ENCODE measurements at regions of chr1 and their contacts with region 1.

Region 1: GRCh38 chr1:89820422-89821321 is at the start of gene LRRC8D:
- DNase-seq: peak; percentile 89
- H3K4me3 ChIP-seq: peak within 1 kb of the TSS; percentile 74
- H3K27ac ChIP-seq: peak within 1 kb of the TSS; percentile 89
- H3K4me1 ChIP-seq: peaks cover 37% of the 10 kb centered on the region
- CTCF ChIP-seq: no peak
- total RNA-seq, gene LRRC8D: 19.3 and 23.8 TPM in 2 replicates

Region 2: GRCh38 chr1:89794406-89794805 is 26.3 kb before region 1 on chr1:
- CTCF ChIA-PET with region 1: no interaction called
- POLR2A ChIA-PET with region 1: no interaction called
- intact Hi-C with region 1: no loop called
- DNase-seq: no peak
- H3K4me3 ChIP-seq: no peak overlapping the region
- H3K27ac ChIP-seq: no peak overlapping the region
- H3K4me1 ChIP-seq: no peaks in the 10 kb centered on the region
- CTCF ChIP-seq: no peak

Region 3: GRCh38 chr1:89843281-89844121 is 22.8 kb after region 1 on chr1:
- CTCF ChIA-PET with region 1: interaction called, 3 read pairs
- POLR2A ChIA-PET with region 1: interaction called, 72 read pairs
- intact Hi-C with region 1: loop called (anchors 1 kb)
- DNase-seq: peak; percentile 85
- H3K4me3 ChIP-seq: peak overlapping the region; percentile 87
- H3K27ac ChIP-seq: peak overlapping the region; percentile 52
- H3K4me1 ChIP-seq: peaks cover 41% of the 10 kb centered on the region
- CTCF ChIP-seq: peak; percentile 80

Region 4: GRCh38 chr1:89865498-89866385 is 45.1 kb after region 1 on chr1:
- CTCF ChIA-PET with region 1: no interaction called
- POLR2A ChIA-PET with region 1: no interaction called
- intact Hi-C with region 1: no loop called
- DNase-seq: no peak
- H3K4me3 ChIP-seq: no peak overlapping the region
- H3K27ac ChIP-seq: no peak overlapping the region
- H3K4me1 ChIP-seq: peaks cover 27% of the 10 kb centered on the region
- CTCF ChIP-seq: no peak

Region 5: DNA sequence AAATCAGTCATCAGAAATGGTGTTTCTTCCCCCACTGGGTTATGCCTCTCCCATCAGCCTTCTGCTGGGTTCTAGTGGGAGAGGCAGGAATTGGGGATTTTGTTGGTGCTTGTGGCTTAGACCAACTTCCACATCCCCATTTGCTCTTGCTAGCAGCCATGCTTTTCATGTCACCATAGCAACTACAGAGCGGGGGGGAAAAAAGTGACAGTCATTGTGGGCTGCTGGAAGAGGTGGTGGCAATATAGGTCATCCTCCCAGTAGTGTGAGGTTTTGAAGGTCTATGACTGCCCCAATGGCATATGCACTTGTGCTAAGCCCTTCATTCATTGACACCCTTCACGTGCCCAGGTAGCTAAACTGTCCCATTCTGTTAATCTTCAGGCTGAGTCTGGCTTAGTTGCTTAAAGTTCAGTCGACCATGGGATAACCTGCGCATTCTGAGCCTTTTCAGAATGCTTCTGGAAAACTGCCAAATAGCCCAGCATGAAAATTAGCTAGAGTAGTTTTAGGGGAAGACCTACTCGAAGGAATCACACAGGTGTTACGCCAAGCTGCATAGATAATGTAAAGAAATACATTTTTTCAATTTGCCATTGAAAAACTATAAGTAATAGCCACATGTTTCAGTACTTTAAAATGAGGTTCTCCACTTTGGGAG is 120.6 kb after region 1 on chr1:
- CTCF ChIA-PET with region 1: no interaction called
- POLR2A ChIA-PET with region 1: no interaction called
- intact Hi-C with region 1: no loop called
- DNase-seq: peak; percentile 14
- H3K4me3 ChIP-seq: no peak overlapping the region
- H3K27ac ChIP-seq: no peak overlapping the region
- H3K4me1 ChIP-seq: peaks cover 11% of the 10 kb centered on the region
- CTCF ChIP-seq: no peak

Region 6: DNA sequence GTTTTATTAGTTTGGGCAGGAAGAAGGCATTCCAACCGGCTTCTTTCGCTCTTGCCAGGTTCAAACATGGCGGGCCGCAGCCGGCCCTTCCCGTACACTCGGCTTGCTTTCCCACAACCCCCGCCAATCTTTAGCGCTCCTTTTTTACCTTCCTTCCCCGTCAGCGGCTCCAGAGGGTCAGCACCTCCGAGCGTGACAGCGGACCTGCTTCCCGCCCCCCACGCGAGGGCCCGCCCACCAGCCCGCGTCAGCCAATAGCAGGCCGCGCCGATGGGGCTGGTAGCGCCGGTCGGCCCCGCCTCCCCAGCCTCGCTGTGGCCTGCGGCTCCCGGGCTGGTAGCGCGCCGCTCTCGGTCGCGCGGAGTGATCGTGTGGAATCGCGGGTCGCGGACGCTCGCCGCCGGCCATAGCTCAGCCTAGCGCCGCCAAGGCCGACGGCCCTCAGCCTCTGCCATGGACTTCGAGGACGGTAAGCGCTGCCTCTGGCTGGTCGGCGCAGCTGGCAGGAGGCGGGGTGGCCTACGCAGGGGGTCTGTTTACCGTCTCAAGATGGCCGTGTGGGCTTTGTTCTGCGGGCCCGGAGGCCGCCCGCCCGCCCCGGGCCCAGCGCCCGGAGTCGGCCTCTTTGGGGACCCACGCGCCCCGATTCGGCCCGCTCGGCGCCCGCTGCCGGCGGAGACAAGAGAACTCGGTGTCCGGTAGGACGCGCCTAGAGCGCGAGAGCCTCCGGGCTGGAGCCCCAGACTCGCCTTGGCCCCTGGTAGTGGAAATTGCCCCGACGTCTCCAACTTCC is 174.3 kb after region 1 on chr1 and contains the start of gene ZNF326:
- CTCF ChIA-PET with region 1: no interaction called
- POLR2A ChIA-PET with region 1: interaction called, 3 read pairs
- intact Hi-C with region 1: loop called (anchors 1 kb)
- DNase-seq: peak; percentile 94
- H3K4me3 ChIP-seq: peak within 1 kb of the TSS; percentile 90
- H3K27ac ChIP-seq: peak within 1 kb of the TSS; percentile 67
- H3K4me1 ChIP-seq: peaks cover 28% of the 10 kb centered on the region
- CTCF ChIP-seq: no peak
- total RNA-seq, gene ZNF326: 10.5 and 11.5 TPM in 2 replicates

Measured in OCI-LY7 (cell line).